ENCODE measurements at regions of chr5 and their contacts with region 1.

Region 1: GRCh38 chr5:42015681-42016080 is 90.6 kb downstream of the FBXO4 start:
- H3K4me3 ChIP-seq: no peak overlapping the region
- H3K27ac ChIP-seq: no peak overlapping the region
- H3K4me1 ChIP-seq: no peaks in the 10 kb centered on the region
- CTCF ChIP-seq: no peak

Region 2: DNA sequence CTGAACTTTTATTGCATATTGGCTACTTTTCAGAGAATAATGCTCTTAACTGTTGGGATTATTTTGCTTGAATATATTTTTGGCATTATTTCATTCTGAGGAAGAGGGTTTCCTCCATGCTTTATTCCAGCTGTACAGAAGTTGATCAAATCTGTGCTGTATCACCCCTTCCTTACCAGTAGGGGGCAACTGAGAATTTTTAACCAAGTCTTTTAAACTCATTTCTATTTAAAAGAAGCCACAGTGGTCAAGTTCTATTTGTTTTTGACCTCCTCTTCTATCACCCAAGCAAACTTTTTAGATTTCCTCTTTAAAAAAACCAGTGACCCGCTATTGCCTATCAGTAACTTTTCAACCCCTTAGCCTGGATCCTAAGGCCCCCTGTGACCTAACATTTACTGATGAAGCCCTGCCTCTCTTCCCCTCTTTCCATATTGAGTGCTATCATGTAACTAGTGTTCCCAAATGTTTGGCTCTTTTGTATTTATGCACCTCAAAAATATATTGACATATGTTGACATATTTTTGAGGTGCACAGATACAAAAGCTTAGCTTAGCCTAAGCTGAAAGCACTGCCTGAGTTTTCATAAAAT is 10.0 kb before region 1 on chr5:
- CTCF ChIA-PET with region 1: interaction called, 14 read pairs
- POLR2A ChIA-PET with region 1: no interaction called
- H3K4me3 ChIP-seq: no peak overlapping the region
- H3K27ac ChIP-seq: no peak overlapping the region
- H3K4me1 ChIP-seq: no peaks in the 10 kb centered on the region
- CTCF ChIP-seq: 0 out of 2 replicates have a peak, but pooled peaks have one; percentile 14

Region 3: GRCh38 chr5:42148813-42149212 is 133.1 kb after region 1 on chr5:
- CTCF ChIA-PET with region 1: no interaction called
- POLR2A ChIA-PET with region 1: no interaction called
- H3K4me3 ChIP-seq: no peak overlapping the region
- H3K27ac ChIP-seq: no peak overlapping the region
- H3K4me1 ChIP-seq: no peaks in the 10 kb centered on the region
- CTCF ChIP-seq: no peak